Right ventricle myocardium inferior (tissue), 1 donor: ENCODE measurements at regions of chr10 and their contacts with region 1.

Region 1: DNA sequence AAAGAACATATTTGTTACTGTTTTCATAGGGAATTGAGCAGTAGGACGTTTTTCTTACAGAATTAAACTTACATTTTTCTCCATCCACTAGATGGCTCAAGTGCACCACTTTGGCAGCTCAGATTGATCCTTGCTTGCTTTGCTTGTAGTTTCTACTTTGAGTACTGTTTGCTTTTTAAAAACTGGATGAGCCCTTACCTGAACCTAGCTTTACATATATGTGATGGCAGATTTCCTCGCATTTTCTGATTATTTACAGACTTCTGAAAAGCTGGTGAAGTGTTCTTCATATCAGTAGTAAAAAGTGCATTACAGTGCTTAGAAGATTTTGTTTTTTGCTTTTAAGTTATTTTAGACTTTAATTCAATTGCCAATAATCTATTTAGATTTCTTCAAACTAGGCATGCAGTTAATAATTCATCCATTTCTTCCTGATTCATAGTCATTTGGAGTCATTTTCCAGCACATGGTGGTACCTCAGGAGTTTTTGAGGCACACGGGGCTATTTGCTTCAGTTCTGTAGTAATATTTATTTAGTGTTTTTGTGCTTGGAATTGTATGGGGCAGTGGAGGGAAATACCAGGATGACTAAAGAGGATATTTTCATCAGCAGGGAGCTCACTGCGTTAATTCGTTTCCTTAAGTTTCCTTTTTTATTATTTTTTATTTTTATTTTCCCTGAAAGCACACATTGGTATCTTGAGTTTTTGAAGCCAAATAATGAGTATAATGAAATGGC is 57.3 kb downstream of the MAPK8 start:
- DNase-seq: no peak
- ATAC-seq: no peak

Region 2: DNA sequence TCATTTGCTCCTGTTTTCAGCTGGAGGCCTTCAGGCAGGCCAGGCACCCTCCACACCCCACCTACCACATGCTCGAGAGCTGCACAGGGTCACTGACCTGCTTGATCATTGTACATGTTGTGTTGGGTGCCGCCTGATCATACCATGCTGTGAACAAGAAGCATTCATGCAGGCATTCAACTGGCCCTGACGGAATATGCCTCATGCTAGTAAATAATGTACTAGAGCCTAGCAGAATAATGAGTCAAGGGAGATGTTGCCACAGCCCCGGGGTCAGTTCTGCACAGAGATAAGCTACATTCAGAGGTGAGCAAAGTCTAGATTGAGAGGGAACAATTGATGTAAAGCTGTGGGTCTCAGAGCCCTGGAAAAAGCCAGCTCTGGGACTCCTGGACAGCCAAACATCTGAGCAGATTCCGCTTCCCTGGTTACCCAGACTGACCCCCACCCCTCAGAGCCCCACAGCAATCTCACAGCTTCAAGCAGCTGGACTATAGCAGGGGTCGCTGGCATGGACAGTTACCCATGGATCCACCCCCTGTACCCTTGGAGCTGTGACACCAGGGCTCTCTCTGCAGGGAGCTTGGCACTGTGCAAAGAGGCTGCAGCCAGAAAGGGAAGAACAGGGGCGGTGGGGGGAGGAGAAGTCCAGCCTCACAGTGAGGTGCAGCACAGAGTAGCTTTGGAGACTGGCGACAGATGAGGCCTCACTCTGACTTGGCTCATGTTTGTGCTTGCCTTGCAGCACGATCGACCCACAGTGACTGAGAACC is 175.9 kb before region 1 on chr10:
- intact Hi-C with region 1: no loop called
- DNase-seq: no peak
- ATAC-seq: peak; percentile 73

Region 3: GRCh38 chr10:48306265-48306869 is 57.4 kb before region 1 on chr10 and contains the start of gene MAPK8:
- intact Hi-C with region 1: loop called (anchors 5 kb)
- DNase-seq: peak; percentile 95
- ATAC-seq: peak; percentile 96
- total RNA-seq, gene MAPK8: 29.5 TPM

Region 4: GRCh38 chr10:48414778-48415177 is 51.0 kb after region 1 on chr10:
- intact Hi-C with region 1: loop called (anchors 10 kb)
- DNase-seq: no peak
- ATAC-seq: no peak

Region 5: DNA sequence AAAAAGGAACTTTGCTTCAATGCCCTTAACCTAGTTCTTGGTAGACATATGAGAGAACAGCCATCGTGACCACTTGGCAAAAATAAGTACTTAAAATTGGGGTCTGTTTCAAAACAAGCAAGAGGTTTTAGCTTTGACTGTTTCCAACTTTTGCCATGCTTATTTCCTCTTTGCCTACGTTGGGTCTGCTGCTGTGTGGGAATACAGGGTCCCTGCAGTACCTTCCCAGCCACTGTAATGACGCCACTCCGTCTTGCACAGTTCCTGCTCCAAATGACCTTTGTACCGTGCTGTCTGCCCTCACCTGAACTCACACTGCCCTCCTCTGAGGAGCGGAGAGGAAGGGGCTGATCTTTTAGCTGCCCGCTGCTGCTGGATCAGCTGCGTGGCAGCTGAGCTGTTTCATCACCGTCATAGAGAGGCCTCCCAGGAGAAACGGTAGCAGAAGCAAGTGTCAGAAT is 75.8 kb after region 1 on chr10:
- intact Hi-C with region 1: no loop called
- DNase-seq: no peak
- ATAC-seq: peak; percentile 31

Region 6: DNA sequence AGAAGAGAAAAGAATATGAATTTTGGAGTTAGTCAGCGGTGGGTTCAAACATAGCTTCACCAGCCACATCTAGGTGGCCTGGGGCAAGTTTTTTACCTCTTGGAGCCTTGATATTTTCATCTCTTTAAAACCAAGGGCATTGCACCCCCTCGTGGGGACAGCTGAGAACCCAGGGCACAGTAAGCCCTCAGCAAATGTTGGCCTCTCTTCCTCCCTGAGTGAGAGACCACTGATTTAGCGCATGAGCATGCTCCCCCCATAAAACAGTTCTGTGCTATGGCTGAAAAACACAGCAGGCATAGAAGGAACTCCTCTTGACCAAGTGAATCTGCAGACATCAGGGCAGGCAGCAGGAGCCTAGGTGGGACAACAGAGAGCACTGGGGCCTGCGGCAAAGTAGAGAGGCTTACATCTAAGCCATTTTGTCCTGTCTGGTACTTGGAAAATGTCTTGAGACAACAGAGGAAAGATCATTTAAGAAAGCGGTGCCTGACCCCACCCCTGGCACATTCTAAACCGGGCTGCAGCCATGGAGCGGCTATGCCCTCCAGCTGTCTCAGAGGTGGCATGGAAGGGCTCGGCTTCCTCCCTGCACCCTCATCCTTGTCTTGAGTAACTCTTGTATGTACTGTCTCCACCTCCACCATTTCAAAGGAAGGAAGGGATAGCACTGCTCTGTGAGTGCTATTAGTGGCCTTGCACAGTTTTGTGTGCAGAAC is 146.3 kb after region 1 on chr10:
- intact Hi-C with region 1: loop called (anchors 2 kb)
- DNase-seq: no peak
- ATAC-seq: no peak

Region 7: DNA sequence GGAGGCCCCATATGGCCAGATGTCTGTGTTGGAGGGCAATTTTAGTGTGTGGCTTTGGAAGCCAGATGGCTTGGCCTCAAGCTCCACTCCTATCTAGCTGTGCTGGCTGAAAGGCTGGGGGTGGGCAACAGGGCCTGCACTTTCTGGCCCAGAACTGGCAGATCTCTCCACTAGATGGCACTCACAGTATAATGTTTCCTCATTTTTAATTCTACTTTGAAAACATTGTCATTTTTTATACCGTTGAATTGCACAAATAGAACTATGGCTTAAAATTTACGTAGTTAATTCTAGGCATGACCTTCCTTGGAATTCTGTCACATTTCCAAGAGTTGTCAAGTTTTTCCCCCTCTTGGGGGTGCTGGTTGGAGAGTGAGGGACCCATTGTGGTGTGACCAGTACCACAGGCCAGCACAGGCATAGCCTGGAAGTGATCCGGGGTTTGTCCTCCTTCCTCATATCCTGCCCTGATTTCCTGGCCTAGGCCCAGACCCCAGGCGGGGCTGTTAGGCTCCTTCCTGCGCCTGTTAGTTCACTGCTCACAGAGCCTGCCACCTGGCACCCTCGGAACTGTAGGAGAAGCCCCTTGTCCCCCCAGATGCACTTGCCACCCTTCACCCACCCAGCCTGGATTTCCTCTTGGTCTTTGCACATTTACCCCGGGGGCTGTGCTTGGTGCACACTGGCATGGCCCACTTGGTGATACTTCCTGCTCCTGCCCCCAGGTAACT is 188.2 kb after region 1 on chr10:
- intact Hi-C with region 1: loop called (anchors 5 kb)
- DNase-seq: no peak
- ATAC-seq: peak; percentile 55

Region 8: DNA sequence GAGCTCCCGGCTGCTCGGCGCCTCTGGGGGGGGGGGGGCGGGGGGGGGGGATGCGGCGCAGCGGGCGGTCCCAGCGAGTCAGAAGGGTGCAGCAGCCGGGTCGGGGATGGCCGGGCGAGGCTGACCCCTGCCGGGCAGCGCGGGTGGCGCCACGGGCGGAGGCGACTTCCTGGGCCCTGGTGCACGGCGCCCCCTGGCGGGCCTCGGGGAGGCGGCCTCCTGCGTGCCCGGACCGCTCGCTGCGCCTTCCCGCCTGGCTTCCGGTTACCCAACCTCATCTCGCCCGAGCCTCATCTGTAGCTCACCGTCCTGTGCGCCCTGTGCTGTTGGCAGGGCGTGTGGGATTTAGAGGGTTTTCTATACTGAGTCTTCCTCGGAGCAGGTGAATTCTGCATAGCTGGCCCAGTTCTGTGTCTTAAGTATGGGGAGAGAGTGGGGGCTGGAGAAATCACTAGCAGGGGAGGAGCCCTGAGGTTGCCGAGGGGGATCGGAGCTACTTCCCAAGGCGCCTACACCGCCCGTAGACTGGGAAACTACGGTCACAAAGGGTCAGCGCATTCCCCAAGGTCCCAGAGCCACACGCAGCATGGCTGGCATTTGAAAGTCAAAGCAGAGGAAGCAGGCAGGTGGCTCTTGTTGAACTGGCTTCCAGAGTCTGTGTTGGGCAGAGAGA is 292.6 kb after region 1 on chr10:
- intact Hi-C with region 1: loop called (anchors 1 kb)
- DNase-seq: peak; percentile 96
- ATAC-seq: peak; percentile 95

Region 9: DNA sequence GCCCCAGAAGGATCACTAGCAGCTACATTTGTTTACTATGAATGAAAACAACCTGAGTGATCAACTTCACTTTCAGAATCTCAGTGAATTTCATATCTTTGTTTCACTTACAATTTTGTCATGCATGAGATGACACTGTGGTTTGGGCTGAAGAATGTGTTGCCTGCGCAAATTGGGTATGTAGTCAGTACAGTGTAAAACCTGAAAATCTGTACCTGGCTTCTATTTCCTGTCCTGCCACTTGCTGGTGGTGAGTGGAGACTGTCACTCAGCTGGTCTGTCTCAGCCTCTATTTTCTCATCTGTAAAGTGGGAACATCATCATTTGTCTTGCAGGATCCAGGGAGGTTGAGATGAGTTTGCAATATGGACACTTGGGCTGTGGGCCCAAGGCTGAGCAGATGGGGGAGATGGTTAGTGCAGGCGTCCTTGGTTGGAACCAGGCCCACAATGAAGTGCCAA is 438.9 kb after region 1 on chr10:
- intact Hi-C with region 1: loop called (anchors 10 kb)
- DNase-seq: no peak
- ATAC-seq: no peak